ENCODE measurements at regions of chr4 and their contacts with region 1.

Region 1: DNA sequence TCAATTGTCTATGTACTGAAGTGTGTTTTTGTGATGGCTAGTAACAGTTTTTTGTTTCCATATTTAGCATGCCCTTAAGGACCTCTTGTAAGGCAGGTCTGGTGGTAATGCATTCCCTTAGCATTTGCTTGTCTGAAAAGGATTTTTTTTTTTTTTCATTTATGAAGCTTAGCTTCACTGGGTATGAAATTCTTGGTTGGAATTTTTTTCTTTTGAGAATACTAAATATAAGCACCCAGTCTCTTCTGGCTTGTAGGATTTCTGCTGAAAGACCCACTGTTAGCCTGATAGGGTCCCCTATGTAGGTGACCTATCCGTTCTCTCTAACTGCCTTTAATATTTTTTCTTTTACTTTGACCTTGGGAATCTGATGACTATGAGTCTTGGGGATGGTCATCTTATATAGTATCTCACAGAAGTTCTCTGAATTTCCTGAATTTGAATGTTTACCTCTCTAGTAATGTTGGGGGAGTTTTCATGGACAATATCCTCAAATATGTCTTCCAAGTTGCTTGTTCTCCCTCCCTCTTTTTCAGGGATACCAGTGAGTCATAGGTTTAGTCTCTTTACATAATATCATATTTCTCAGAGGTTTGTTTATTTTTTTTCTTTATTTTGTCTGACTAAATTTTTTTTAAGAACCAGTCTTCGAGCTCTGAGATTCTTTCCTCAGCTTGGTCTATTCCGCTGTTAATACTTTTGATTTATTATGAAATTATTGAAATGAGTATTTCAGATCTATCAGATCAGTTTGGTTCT is 157.1 kb upstream of the PGRMC2 start:
- DNase-seq: no peak
- ATAC-seq: no peak
- H3K4me3 Mint-ChIP-seq: no peak overlapping the region
- H3K27ac Mint-ChIP-seq: no peak overlapping the region
- H3K4me1 Mint-ChIP-seq: no peaks in the 10 kb centered on the region
- H3K27me3 Mint-ChIP-seq: peaks cover 4% of the 10 kb centered on the region

Region 2: DNA sequence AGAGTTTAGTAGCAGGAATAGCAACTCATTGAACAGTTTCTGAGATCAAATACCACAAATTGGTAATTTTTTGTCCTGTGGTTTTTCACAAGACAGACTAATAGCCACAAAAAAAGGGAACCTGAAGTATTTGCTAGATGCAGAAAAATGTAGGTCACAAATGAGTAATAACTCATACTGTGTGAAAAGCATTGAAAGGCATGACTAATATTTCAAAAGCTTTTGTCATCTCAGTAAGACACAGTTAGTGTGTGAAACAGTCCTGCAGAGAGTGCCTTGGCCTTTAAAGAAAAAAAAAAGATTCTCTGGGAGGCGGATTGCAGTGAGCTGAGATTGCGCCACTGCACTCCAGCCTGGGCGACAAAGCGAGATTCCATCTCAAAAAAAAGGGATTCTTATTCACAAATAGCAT is 745.9 kb before region 1 on chr4:
- CTCF ChIA-PET with region 1: no interaction called
- POLR2A ChIA-PET with region 1: no interaction called
- intact Hi-C with region 1: loop called in 1 of 2 experiments (anchors 5 kb)
- DNase-seq: no peak
- ATAC-seq: peak; percentile 64
- H3K4me3 Mint-ChIP-seq: no peak overlapping the region
- H3K27ac Mint-ChIP-seq: no peak overlapping the region
- H3K4me1 Mint-ChIP-seq: no peaks in the 10 kb centered on the region
- H3K27me3 Mint-ChIP-seq: peaks cover 4% of the 10 kb centered on the region

Region 3: DNA sequence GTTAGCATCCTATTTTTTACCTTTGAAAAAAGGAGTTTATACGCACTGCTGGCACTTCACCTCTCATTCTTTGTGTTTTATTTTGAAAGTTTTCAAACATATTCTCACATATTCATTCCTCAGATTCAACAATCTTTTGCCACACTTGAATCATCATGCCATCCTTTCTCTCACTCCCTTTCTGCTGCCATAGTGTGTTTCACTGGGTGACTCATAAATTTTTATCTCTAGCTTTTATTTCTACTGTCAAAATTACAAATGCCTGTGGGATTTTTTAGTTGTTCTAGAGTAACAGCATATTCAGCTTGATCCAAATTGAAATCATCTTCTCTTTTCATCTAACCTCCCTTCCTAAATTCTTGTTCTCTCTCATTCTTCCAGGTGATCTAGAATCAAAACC is 507.7 kb before region 1 on chr4:
- CTCF ChIA-PET with region 1: no interaction called
- POLR2A ChIA-PET with region 1: no interaction called
- intact Hi-C with region 1: no loop called
- DNase-seq: no peak
- ATAC-seq: peak; percentile 33
- H3K4me3 Mint-ChIP-seq: no peak overlapping the region
- H3K27ac Mint-ChIP-seq: no peak overlapping the region
- H3K4me1 Mint-ChIP-seq: peaks cover 7% of the 10 kb centered on the region
- H3K27me3 Mint-ChIP-seq: no peaks in the 10 kb centered on the region

Region 4: DNA sequence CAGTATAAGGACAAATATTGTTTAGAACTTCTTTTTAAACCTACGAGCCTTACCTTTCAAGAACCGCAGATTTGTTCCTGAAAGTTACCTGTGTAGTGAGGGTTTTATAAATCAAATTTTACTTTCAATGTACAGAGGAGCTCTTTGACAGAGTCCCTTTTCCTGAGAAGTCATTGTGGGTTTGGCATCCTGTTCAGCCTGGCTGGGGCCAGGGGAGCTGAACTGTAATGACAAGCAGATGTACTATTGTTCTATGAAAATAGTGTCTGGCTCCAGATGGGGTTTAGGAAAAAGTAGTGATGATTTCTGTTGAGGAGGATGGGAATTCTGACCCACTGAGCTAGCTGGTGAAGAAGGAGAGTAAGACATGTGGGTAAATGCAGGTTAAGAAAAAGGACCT is 39.1 kb after region 1 on chr4:
- CTCF ChIA-PET with region 1: no interaction called
- POLR2A ChIA-PET with region 1: no interaction called
- intact Hi-C with region 1: no loop called
- DNase-seq: no peak
- ATAC-seq: no peak
- H3K4me3 Mint-ChIP-seq: no peak overlapping the region
- H3K27ac Mint-ChIP-seq: no peak overlapping the region
- H3K4me1 Mint-ChIP-seq: no peaks in the 10 kb centered on the region
- H3K27me3 Mint-ChIP-seq: peaks cover 2% of the 10 kb centered on the region

Measured in activated CD4-positive, alpha-beta T cell treated with anti-CD3 and anti-CD28 coated beads for 36 hours (primary cell).